Common myeloid progenitor, CD34-positive (primary cell): ENCODE measurements at regions of chr11 and their contacts with region 1.

Region 1: GRCh38 chr11:111992206-111992855 is 32.9 kb upstream of the DLAT start:
- DNase-seq: no peak
- H3K4me3 ChIP-seq: no peak overlapping the region
- H3K27ac ChIP-seq: no peak overlapping the region
- H3K4me1 ChIP-seq: no peaks in the 10 kb centered on the region
- H3K27me3 ChIP-seq: no peaks in the 10 kb centered on the region

Region 2: DNA sequence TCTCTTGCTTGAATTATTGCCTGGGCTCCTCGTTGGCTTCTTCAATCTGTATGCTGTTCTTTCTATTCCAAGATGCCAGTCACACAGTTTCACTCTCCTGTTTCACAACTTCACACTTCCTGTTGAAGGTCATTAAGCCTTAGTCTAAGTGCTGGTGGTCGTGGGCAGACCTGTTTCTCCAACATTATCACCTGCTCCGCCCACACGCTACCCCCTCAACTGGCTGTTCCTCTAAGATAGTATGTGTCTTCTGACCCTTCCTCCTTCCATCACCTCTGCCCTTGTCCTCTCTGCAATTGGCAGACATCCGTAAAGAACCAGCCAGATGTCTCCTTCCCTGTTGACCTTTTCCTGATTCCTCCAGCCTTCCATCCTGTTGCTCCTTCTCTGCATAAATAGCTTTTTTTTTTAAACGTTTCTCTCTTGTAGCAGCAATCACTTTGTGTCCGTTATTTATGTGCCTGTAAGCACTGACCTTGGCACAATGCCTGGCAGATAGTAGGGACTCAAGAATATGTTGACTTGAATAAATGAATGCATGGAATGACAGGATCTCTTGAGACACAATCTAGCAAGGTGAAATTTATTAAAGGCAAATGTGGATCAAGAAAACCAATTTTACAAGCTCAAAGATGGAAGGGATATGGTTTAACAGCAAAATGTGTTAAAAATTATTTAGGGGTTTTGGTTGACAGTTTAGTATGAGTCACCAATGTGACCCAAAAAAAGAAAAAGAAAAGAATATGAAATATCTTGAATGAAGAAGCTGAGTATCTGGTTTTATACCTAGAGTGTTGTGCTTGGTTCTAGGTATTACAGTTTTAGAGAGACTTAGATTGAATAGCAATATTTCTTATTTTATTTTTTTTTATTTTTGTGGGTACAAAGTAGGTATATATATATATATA is 42.6 kb before region 1 on chr11:
- CTCF ChIA-PET with region 1: no interaction called
- POLR2A ChIA-PET with region 1: no interaction called
- DNase-seq: peak in 1 of 3 donors; percentile 29
- H3K4me3 ChIP-seq: no peak overlapping the region
- H3K27ac ChIP-seq: no peak overlapping the region
- H3K4me1 ChIP-seq: peaks cover 0 to 4% (median 0%) of the 10 kb centered on the region in 4 experiments
- H3K27me3 ChIP-seq: no peaks in the 10 kb centered on the region

Region 3: GRCh38 chr11:112004389-112004788 is 12.1 kb after region 1 on chr11:
- CTCF ChIA-PET with region 1: interaction called, 12 read pairs
- POLR2A ChIA-PET with region 1: no interaction called
- DNase-seq: peak; percentile 22 to 49 (median 27)
- H3K4me3 ChIP-seq: no peak overlapping the region
- H3K27ac ChIP-seq: no peak overlapping the region
- H3K4me1 ChIP-seq: no peaks in the 10 kb centered on the region
- H3K27me3 ChIP-seq: no peaks in the 10 kb centered on the region